IMR-90 (cell line): ENCODE measurements at regions of chr18 and their contacts with region 1.

Region 1: GRCh38 chr18:79790996-79791972 is 6.5 kb upstream of the KCNG2 start:
- DNase-seq: peak; percentile 99
- ATAC-seq: peak; percentile 87
- H3K4me3 ChIP-seq: peak overlapping the region; percentile 0; the same call in 1 of the 2 replicates
- H3K27ac ChIP-seq: peak overlapping the region; percentile 88
- H3K4me1 ChIP-seq: peaks cover 22% of the 10 kb centered on the region
- H3K27me3 ChIP-seq: peaks cover 19% of the 10 kb centered on the region
- CTCF ChIP-seq: no peak
- POLR2A ChIP-seq: no peak
- RAD21 ChIP-seq: no peak

Region 2: GRCh38 chr18:79693561-79694205 is 97.6 kb before region 1 on chr18:
- CTCF ChIA-PET with region 1: no interaction called
- POLR2A ChIA-PET with region 1: no interaction called
- dilution Hi-C with region 1: no loop called
- in situ Hi-C with region 1: no loop called
- intact Hi-C with region 1: loop called (anchors 1 kb)
- DNase-seq: no peak
- ATAC-seq: no peak
- H3K4me3 ChIP-seq: no peak overlapping the region
- H3K27ac ChIP-seq: no peak overlapping the region
- H3K4me1 ChIP-seq: peaks cover 16% of the 10 kb centered on the region
- H3K27me3 ChIP-seq: no peaks in the 10 kb centered on the region
- CTCF ChIP-seq: no peak
- POLR2A ChIP-seq: no peak
- RAD21 ChIP-seq: no peak

Region 3: GRCh38 chr18:80147418-80148325 is 356.4 kb after region 1 on chr18:
- CTCF ChIA-PET with region 1: no interaction called
- POLR2A ChIA-PET with region 1: no interaction called
- dilution Hi-C with region 1: no loop called
- in situ Hi-C with region 1: no loop called
- intact Hi-C with region 1: loop called (anchors 5 kb)
- DNase-seq: peak; percentile 72
- ATAC-seq: peak; percentile 82
- H3K4me3 ChIP-seq: peak overlapping the region; percentile 69
- H3K27ac ChIP-seq: peak overlapping the region; percentile 54
- H3K4me1 ChIP-seq: peaks cover 8% of the 10 kb centered on the region
- H3K27me3 ChIP-seq: no peaks in the 10 kb centered on the region
- CTCF ChIP-seq: no peak
- POLR2A ChIP-seq: no peak
- RAD21 ChIP-seq: no peak